ENCODE measurements at regions of chr2 and their contacts with region 1.

Region 1: GRCh38 chr2:120312861-120313694 is 32.9 kb upstream of the INHBB start:
- DNase-seq: peak; percentile 90
- H3K4me3 ChIP-seq: peak overlapping the region; percentile 27 to 71 (median 57)
- H3K27ac ChIP-seq: no peak overlapping the region
- H3K4me1 ChIP-seq: peaks cover 16% of the 10 kb centered on the region
- H3K27me3 ChIP-seq: no peaks in the 10 kb centered on the region
- CTCF ChIP-seq: peak; percentile 86 to 91
- POLR2A ChIP-seq: peak; percentile 16

Region 2: GRCh38 chr2:119759451-119760236 is 553.4 kb before region 1 on chr2 and contains the start of gene PTPN4:
- CTCF ChIA-PET with region 1: interaction called, 3 read pairs
- POLR2A ChIA-PET with region 1: no interaction called
- dilution Hi-C with region 1: no loop called
- intact Hi-C with region 1: loop called (anchors 5 kb)
- DNase-seq: peak; percentile 99
- H3K4me3 ChIP-seq: peak within 1 kb of the TSS; percentile 55 to 98 (median 97)
- H3K27ac ChIP-seq: peak within 1 kb of the TSS; percentile 52
- H3K4me1 ChIP-seq: peaks cover 19% of the 10 kb centered on the region
- H3K27me3 ChIP-seq: no peaks in the 10 kb centered on the region
- CTCF ChIP-seq: no peak
- POLR2A ChIP-seq: peak; percentile 64
- total RNA-seq, gene PTPN4: 26.1 and 29.6 TPM in 2 replicates

Region 3: GRCh38 chr2:120109186-120110061 is 203.7 kb before region 1 on chr2:
- CTCF ChIA-PET with region 1: interaction called, 58 read pairs
- POLR2A ChIA-PET with region 1: no interaction called
- dilution Hi-C with region 1: no loop called
- intact Hi-C with region 1: loop called (anchors 1 kb)
- DNase-seq: peak; percentile 64
- H3K4me3 ChIP-seq: no peak overlapping the region
- H3K27ac ChIP-seq: no peak overlapping the region
- H3K4me1 ChIP-seq: peaks cover 26% of the 10 kb centered on the region
- H3K27me3 ChIP-seq: no peaks in the 10 kb centered on the region
- CTCF ChIP-seq: peak; percentile 18 to 30
- POLR2A ChIP-seq: no peak

Region 4: DNA sequence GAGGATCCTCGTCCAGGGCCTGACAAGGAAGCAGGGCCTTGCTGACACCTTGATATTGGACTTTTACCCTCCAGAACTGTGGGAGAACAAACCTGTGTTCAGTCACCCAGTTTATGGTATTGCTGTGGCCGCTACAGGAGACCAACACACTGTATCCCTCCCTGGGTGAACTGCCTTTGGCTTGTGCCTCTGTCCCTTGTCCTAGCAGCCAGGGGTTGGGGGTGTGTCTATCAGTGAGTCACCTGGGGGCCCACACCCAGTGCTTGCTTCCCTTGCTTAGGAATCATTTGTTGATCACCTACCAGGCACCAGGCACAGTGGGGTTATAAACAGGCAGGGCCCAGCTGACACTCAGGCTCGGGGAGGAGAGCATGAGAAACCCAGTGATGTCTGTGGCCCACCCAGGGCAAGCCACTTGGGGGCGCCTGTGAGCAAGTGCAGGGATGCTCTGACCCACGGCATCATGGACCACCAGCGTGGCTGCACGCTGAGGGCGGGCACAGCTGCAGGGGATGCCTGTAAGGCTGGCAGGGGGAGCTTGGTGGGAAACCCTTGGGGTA is 107.0 kb before region 1 on chr2:
- CTCF ChIA-PET with region 1: interaction called, 42 read pairs
- POLR2A ChIA-PET with region 1: no interaction called
- dilution Hi-C with region 1: no loop called
- intact Hi-C with region 1: loop called (anchors 1 kb)
- DNase-seq: no peak
- H3K4me3 ChIP-seq: no peak overlapping the region
- H3K27ac ChIP-seq: no peak overlapping the region
- H3K4me1 ChIP-seq: no peaks in the 10 kb centered on the region
- H3K27me3 ChIP-seq: no peaks in the 10 kb centered on the region
- CTCF ChIP-seq: peak; percentile 52 to 65
- POLR2A ChIP-seq: no peak

Region 5: DNA sequence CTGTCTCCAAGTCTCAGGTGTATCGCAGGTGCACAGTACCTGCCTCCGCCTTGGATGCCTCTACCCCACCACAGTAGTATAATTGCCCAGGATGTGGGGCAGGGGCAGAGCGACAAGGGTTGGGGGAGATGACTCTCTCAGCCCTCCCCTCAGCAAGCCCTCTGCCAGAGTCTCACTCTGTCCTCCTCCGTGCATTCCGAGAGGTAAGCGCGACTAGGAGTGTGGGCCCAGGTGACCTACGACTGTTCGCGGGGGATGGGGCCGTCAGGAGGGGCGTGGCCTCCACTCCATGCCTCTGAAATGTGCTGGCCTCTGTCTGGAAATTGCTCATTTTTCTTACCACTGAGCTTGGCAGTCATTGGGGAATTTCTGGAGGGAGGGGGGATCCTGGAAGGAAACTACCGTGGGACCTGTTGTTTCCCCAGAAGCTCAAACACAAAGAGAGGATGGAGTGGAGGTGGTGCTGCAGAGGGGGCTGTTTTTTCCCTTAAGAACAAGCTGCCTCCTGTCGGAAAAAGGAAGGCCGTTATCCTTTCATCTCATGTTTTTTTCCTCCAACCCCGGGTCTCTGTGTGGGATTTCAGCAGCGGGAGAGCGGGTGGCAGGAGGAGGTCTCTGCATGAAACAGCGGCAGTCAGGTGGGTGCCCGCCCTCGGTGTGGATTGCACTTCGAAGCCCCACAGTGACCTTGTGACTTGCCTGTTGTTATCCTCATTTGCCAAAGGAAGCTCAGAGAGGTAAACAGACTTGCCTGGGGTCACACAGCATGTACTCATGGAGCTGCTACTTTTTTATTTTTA is 73.4 kb before region 1 on chr2:
- CTCF ChIA-PET with region 1: interaction called, 22 read pairs
- POLR2A ChIA-PET with region 1: no interaction called
- dilution Hi-C with region 1: no loop called
- intact Hi-C with region 1: no loop called
- DNase-seq: peak; percentile 99
- H3K4me3 ChIP-seq: no peak overlapping the region
- H3K27ac ChIP-seq: peak overlapping the region; percentile 37
- H3K4me1 ChIP-seq: peaks cover 34% of the 10 kb centered on the region
- H3K27me3 ChIP-seq: no peaks in the 10 kb centered on the region
- CTCF ChIP-seq: peak in 1 of 2 donors; percentile 4
- POLR2A ChIP-seq: peak; percentile 57

Region 6: GRCh38 chr2:120294008-120294340 is 19.1 kb before region 1 on chr2:
- CTCF ChIA-PET with region 1: interaction called, 13 read pairs
- POLR2A ChIA-PET with region 1: interaction called, 3 read pairs
- dilution Hi-C with region 1: no loop called
- intact Hi-C with region 1: no loop called
- DNase-seq: no peak
- H3K4me3 ChIP-seq: no peak overlapping the region
- H3K27ac ChIP-seq: no peak overlapping the region
- H3K4me1 ChIP-seq: peaks cover 14% of the 10 kb centered on the region
- H3K27me3 ChIP-seq: no peaks in the 10 kb centered on the region
- CTCF ChIP-seq: no peak
- POLR2A ChIP-seq: no peak